WTC11 (cell line): ENCODE measurements at regions of chr10 and their contacts with region 1.

Region 1: GRCh38 chr10:48309711-48310226 is 3.3 kb downstream of the MAPK8 start:
- DNase-seq: no peak
- ATAC-seq: no peak
- H3K4me3 Mint-ChIP-seq: no peak overlapping the region
- H3K27ac Mint-ChIP-seq: no peak overlapping the region
- H3K4me1 Mint-ChIP-seq: peaks cover 20% of the 10 kb centered on the region
- H3K27me3 Mint-ChIP-seq: peaks cover 12% of the 10 kb centered on the region
- CTCF ChIP-seq: no peak

Region 2: DNA sequence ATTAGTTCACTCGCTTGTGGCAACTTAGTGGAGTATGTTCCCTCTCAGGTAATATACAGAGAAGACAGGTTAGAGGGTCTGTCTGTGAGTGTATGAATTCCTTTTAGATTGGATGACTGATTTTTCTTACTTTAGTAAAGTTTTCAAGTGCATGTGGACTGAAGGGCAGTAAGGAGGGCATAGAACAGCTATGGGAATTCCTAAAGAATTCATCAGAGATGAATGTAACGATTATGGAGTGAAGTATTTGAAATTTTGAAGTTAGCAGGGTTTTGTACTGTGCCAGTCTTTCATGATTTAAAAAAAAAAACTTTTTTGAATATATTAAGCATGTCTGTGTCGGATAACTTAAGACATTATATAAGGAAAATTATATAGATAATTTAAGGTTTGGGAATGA is 12.2 kb after region 1 on chr10:
- CTCF ChIA-PET with region 1: interaction called, 17 read pairs
- POLR2A ChIA-PET with region 1: no interaction called
- DNase-seq: no peak
- ATAC-seq: no peak
- H3K4me3 Mint-ChIP-seq: no peak overlapping the region
- H3K27ac Mint-ChIP-seq: no peak overlapping the region
- H3K4me1 Mint-ChIP-seq: peaks cover 44% of the 10 kb centered on the region
- H3K27me3 Mint-ChIP-seq: no peaks in the 10 kb centered on the region
- CTCF ChIP-seq: no peak

Region 3: GRCh38 chr10:48598243-48598935 is 288.6 kb after region 1 on chr10:
- CTCF ChIA-PET with region 1: no interaction called
- POLR2A ChIA-PET with region 1: no interaction called
- DNase-seq: no peak
- ATAC-seq: no peak
- H3K4me3 Mint-ChIP-seq: no peak overlapping the region
- H3K27ac Mint-ChIP-seq: no peak overlapping the region
- H3K4me1 Mint-ChIP-seq: peaks cover 21% of the 10 kb centered on the region
- H3K27me3 Mint-ChIP-seq: no peaks in the 10 kb centered on the region
- CTCF ChIP-seq: no peak